Psoas muscle (tissue), 8 donors: ENCODE measurements at regions of chr17 and their contacts with region 1.

Region 1: GRCh38 chr17:29219378-29220047 is 27.1 kb upstream of the CRYBA1 start:
- DNase-seq: peak; percentile 69 to 75
- ATAC-seq: peak; percentile 68 to 93 (median 76)
- H3K4me3 ChIP-seq: no peak overlapping the region
- H3K27ac ChIP-seq: no peak overlapping the region
- H3K4me1 ChIP-seq: no peaks in the 10 kb centered on the region
- H3K27me3 ChIP-seq: no peaks in the 10 kb centered on the region
- CTCF ChIP-seq: peak; percentile 90

Region 2: GRCh38 chr17:29293890-29294579 is 74.5 kb after region 1 on chr17 and contains the start of gene NUFIP2:
- intact Hi-C with region 1: loop called in 1 of 2 experiments (anchors 2 kb)
- DNase-seq: peak; percentile 99 to 100
- ATAC-seq: peak; percentile 92 to 94 (median 94)
- H3K4me3 ChIP-seq: peak within 1 kb of the TSS; percentile 98
- H3K27ac ChIP-seq: peak within 1 kb of the TSS; percentile 99
- H3K4me1 ChIP-seq: peaks cover 28% of the 10 kb centered on the region
- H3K27me3 ChIP-seq: no peaks in the 10 kb centered on the region
- CTCF ChIP-seq: no peak
- total RNA-seq, gene NUFIP2: 31.1 to 50.0 (median 45.4) TPM